Naive thymus-derived CD4-positive, alpha-beta T cell (primary cell): ENCODE measurements at regions of chr16 and their contacts with region 1.

Region 1: DNA sequence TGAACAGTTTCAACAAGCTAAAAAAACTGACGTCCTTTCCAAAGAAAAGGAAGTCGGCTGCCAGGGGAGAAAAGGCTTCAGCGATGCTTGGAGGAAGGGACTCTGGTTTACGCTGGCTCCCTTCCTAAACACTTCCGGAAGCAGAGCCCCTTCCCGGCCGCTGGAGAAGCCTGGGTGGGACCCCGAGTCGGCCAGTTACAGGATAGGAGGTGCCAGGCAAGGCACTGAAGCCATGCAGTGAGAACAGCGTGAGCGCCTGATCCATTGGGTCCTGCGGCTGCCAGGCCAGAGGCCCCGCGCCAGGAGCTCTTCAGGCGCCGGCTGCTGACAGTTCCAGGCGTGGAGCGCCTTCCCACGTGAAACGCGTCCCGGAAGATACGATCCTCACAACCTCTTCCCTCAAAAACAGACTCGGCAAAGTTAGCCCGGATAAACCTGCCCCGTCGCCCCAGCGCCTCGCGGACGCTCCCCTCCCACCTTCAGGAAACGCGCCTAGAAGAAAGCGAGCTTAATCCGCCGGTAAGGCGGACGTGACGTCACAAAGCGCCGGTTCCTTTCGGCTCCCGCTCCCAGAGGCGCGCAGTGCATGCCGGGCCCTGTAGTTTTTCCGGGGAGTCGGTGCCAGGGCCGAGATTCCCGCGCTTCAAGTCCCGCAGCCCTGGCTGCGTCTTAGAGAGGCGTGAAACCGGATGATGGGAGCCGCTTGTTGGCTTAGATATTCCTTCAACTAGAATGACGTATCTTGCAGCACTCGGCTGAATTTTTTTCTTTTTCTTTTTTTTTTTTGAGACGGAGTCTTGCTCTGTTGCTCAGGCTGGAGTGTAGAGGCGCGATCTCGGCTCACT is at the start of gene ADAT1:
- DNase-seq: peak; percentile 91 to 99 (median 97)
- ATAC-seq: peak; percentile 97
- H3K4me3 ChIP-seq: peak within 1 kb of the TSS; percentile 80
- H3K4me3 Mint-ChIP-seq: peak within 1 kb of the TSS; percentile 91 to 99 (median 96)
- H3K27ac ChIP-seq: peak within 1 kb of the TSS; percentile 93
- H3K27ac Mint-ChIP-seq: peak within 1 kb of the TSS; percentile 92 to 99 (median 97)
- H3K4me1 ChIP-seq: peaks cover 30 to 49% of the 10 kb centered on the region in 2 donors
- H3K4me1 Mint-ChIP-seq: peaks cover 29 to 76% (median 52%) of the 10 kb centered on the region in 7 donors
- H3K27me3 ChIP-seq: no peaks in the 10 kb centered on the region
- H3K27me3 Mint-ChIP-seq: no peaks in the 10 kb centered on the region
- total RNA-seq, gene ADAT1: 41.3 to 69.4 (median 63.6) TPM

Region 2: DNA sequence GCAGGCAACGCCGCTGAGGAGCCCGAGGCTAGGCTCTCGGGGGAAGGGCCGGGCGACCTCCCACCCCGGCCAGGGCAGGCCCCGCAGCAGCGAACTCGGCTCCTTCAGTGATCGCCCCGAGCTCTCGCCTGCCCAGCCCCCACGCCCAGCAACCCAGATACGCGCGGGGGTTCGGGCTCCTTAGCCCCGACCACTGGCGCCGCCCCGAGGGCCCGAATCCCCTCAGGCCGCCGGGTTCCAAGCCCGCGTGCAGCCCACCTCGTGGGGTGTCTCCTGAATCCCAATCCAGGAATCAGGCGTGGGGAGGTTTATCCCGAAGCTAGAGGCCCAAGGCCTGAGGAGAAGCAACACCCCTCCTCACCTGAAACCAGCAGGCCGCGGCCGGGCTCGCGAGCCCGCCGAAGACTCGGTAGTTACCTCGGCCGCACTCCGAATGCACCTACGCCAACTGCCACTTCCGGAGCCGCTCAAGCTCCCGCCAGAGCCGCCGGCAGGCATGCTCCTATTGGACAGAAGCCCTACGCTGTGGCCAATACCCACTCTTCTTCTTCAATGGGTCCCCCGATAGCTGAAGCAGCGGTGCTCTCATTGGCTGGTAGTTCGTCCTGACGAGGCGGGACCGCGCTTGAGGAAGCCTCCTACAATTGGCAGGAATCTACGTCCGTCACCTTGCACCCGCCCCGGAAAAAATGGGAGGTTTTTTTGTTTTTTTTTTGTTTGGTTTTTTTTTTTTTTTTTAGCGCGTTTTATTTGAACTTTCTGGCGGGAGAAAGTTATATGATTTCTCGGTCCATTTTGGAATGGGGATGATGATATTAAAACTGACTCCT is 956.3 kb before region 1 on chr16 and contains the start of gene RFWD3:
- CTCF ChIA-PET with region 1: no interaction called
- POLR2A ChIA-PET with region 1: no interaction called
- intact Hi-C with region 1: loop called in 1 of 2 experiments (anchors 10 kb)
- DNase-seq: peak; percentile 80 to 99 (median 97)
- ATAC-seq: peak; percentile 100
- H3K4me3 ChIP-seq: peak within 1 kb of the TSS; percentile 89
- H3K4me3 Mint-ChIP-seq: peak within 1 kb of the TSS; percentile 87 to 98 (median 95)
- H3K27ac ChIP-seq: peak within 1 kb of the TSS; percentile 86
- H3K27ac Mint-ChIP-seq: peak within 1 kb of the TSS; percentile 92 to 97 (median 95)
- H3K4me1 ChIP-seq: peaks cover 0 to 10% of the 10 kb centered on the region in 2 donors
- H3K4me1 Mint-ChIP-seq: peaks cover 26 to 48% (median 44%) of the 10 kb centered on the region in 7 donors
- H3K27me3 ChIP-seq: no peaks in the 10 kb centered on the region
- H3K27me3 Mint-ChIP-seq: peaks cover 0 to 2% (median 0%) of the 10 kb centered on the region in 5 donors
- total RNA-seq, gene RFWD3: 39.3 to 88.0 (median 56.9) TPM

Region 3: DNA sequence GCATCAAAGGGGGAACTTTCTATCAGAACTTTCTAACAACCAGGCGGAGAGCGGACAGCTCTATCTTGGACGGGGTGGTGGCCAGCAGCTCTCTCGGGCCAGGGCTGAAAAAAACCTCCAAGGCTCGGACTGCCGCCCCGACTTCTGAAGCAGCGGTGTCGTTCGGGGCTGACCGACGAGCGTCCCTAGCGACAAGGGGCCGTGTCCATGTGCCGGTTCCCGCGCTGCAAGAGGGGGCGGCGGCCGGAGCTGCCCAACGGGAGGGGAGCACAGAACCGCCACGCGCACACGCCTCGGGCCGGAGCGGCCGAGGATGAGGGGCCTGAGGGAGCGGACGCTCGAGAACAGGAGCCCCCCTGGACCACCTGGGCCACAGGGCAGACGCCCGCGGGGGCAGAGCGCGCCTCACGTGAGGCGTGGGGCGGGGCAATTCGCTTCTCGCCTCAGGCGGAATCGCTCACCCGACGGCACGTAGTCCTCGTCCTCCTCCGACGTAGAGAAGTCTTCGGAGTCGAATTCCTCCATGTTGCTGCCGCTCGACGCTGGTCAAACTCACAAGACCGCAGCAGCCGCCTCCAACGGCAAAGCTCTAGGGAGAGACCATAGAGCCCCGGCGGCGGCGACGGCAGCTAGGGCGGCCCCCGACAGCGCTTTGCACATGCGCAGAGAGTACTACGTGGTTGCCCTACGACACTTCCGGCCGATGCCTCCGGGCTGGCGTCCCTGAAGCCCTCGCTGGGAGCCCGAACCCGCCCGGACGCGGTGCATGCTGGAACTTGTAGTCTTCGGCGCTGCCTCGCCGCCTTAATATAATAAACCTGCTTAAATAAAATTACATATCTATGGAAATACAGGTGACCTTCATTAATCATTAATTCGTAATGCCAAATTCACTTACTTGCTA is 189.9 kb before region 1 on chr16 and contains the start of gene CFDP1:
- CTCF ChIA-PET with region 1: no interaction called
- POLR2A ChIA-PET with region 1: interaction called, 6 read pairs
- intact Hi-C with region 1: loop called (anchors 1 kb)
- DNase-seq: peak; percentile 93 to 98 (median 95)
- ATAC-seq: peak; percentile 92
- H3K4me3 ChIP-seq: peak within 1 kb of the TSS; percentile 92
- H3K4me3 Mint-ChIP-seq: peak within 1 kb of the TSS; percentile 87 to 99 (median 94)
- H3K27ac ChIP-seq: peak within 1 kb of the TSS; percentile 94
- H3K27ac Mint-ChIP-seq: peak within 1 kb of the TSS; percentile 94 to 100 (median 97)
- H3K4me1 ChIP-seq: peaks cover 5 to 9% of the 10 kb centered on the region in 2 donors
- H3K4me1 Mint-ChIP-seq: peaks cover 19 to 53% (median 43%) of the 10 kb centered on the region in 7 donors
- H3K27me3 ChIP-seq: no peaks in the 10 kb centered on the region
- H3K27me3 Mint-ChIP-seq: no peaks in the 10 kb centered on the region
- total RNA-seq, gene CFDP1: 34.9 to 41.4 (median 39.4) TPM

Region 4: GRCh38 chr16:75519881-75520280 is 103.1 kb before region 1 on chr16:
- CTCF ChIA-PET with region 1: interaction called, 3 read pairs
- POLR2A ChIA-PET with region 1: interaction called, 3 read pairs
- intact Hi-C with region 1: loop called (anchors 1 kb)
- DNase-seq: no peak
- ATAC-seq: no peak
- H3K4me3 ChIP-seq: no peak overlapping the region
- H3K4me3 Mint-ChIP-seq: no peak overlapping the region
- H3K27ac ChIP-seq: no peak overlapping the region
- H3K27ac Mint-ChIP-seq: no peak overlapping the region
- H3K4me1 ChIP-seq: peaks cover 0 to 3% of the 10 kb centered on the region in 2 donors
- H3K4me1 Mint-ChIP-seq: peaks cover 5 to 17% (median 13%) of the 10 kb centered on the region in 7 donors
- H3K27me3 ChIP-seq: no peaks in the 10 kb centered on the region
- H3K27me3 Mint-ChIP-seq: peaks cover 0 to 9% (median 0%) of the 10 kb centered on the region in 5 donors

Region 5: DNA sequence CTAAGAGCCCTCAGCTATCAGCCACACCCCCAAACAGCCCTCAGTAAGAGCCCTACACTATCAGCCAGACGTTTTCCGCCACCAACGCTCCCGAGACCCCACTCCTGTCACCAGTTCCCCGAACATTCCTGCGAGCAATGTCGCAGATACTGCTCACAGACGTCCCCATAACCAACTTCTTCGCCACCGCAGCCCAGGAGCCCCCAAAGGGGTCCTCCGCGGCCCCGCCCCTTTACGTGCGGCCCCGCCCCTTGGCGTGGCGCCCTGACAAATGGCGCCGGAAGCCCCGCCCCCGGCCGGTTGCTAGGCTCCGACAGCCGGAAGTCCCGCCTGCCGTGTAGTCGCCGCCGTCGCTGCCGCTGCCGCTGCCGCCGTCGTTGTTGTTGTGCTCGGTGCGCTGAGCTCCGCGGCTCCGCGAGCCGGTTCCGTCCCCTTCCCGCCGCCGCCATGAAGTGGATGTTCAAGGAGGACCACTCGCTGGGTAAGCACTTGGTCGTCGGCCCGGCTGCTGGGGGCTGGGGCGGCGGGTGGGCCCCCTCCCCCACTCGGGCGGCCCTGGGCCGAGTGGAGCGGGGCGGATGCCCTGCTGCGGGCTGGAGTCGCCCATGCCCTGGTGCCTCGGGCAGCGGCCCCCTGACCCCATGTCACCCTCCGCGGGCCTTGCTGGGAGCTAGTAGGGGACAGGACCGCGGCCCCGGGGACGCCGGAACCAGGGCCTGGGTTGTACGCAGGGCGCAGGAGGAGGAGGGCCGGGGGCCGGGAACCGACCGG is 56.8 kb before region 1 on chr16 and contains the start of gene GABARAPL2:
- CTCF ChIA-PET with region 1: interaction called, 3 read pairs
- POLR2A ChIA-PET with region 1: interaction called, 38 read pairs
- intact Hi-C with region 1: loop called (anchors 1 kb)
- DNase-seq: peak; percentile 87 to 97 (median 92)
- ATAC-seq: peak; percentile 90
- H3K4me3 ChIP-seq: peak within 1 kb of the TSS; percentile 93
- H3K4me3 Mint-ChIP-seq: peak within 1 kb of the TSS; percentile 88 to 100 (median 96)
- H3K27ac ChIP-seq: peak within 1 kb of the TSS; percentile 90
- H3K27ac Mint-ChIP-seq: peak within 1 kb of the TSS; percentile 79 to 100 (median 92)
- H3K4me1 ChIP-seq: peaks cover 20 to 27% of the 10 kb centered on the region in 2 donors
- H3K4me1 Mint-ChIP-seq: peaks cover 25 to 50% (median 47%) of the 10 kb centered on the region in 7 donors
- H3K27me3 ChIP-seq: no peaks in the 10 kb centered on the region
- H3K27me3 Mint-ChIP-seq: peaks cover 8 to 16% (median 13%) of the 10 kb centered on the region in 5 donors
- total RNA-seq, gene GABARAPL2: 57.9 to 81.2 (median 75.6) TPM

Region 6: DNA sequence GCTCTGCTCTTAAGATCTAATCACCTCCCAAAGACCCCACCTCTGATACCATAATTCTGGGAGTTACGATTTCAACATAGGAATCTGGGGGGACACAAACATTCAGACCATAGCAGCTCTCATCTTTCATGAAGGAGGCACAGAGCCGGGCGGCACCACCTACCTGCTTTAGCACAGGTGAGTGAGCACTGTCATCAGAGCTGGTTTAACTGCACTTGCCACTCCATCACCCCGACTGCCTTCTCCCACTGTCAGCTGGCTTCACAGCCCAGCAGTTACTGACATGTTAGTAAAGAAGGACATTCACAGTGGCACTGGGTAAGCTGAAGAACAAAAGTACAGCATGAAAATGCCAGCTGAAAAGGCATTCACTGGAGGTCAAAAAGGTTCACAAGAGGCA is 34.3 kb before region 1 on chr16:
- CTCF ChIA-PET with region 1: no interaction called
- POLR2A ChIA-PET with region 1: no interaction called
- intact Hi-C with region 1: no loop called
- DNase-seq: no peak
- ATAC-seq: no peak
- H3K4me3 ChIP-seq: no peak overlapping the region
- H3K4me3 Mint-ChIP-seq: no peak overlapping the region
- H3K27ac ChIP-seq: no peak overlapping the region
- H3K27ac Mint-ChIP-seq: peak overlapping the region in 1 of 9 donors; percentile 5
- H3K4me1 ChIP-seq: no peaks in the 10 kb centered on the region
- H3K4me1 Mint-ChIP-seq: peaks cover 0 to 4% (median 0%) of the 10 kb centered on the region in 7 donors
- H3K27me3 ChIP-seq: no peaks in the 10 kb centered on the region
- H3K27me3 Mint-ChIP-seq: no peaks in the 10 kb centered on the region

Region 7: DNA sequence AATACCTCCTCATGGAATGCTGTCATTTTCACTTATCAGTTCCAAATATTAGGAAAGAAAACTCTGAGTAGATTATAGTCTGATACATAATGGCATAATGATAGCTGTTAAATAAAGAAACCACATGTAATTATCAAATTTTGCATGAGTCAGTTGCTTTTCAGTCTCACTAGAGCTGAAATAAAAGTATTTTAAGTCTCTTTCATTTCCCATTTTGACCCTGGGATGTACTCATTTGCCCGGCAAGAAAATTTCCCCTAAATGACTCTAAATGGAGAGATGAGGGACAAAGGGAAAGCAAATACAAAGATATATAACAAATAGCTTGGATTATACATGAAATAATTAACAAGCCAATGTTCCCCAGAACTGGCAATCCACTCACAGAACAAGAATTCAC is 151.2 kb after region 1 on chr16:
- CTCF ChIA-PET with region 1: no interaction called
- POLR2A ChIA-PET with region 1: no interaction called
- intact Hi-C with region 1: no loop called
- DNase-seq: no peak
- ATAC-seq: no peak
- H3K4me3 ChIP-seq: no peak overlapping the region
- H3K4me3 Mint-ChIP-seq: no peak overlapping the region
- H3K27ac ChIP-seq: no peak overlapping the region
- H3K27ac Mint-ChIP-seq: no peak overlapping the region
- H3K4me1 ChIP-seq: no peaks in the 10 kb centered on the region
- H3K4me1 Mint-ChIP-seq: no peaks in the 10 kb centered on the region
- H3K27me3 ChIP-seq: peaks cover 0 to 15% of the 10 kb centered on the region in 2 donors
- H3K27me3 Mint-ChIP-seq: peaks cover 32 to 50% (median 45%) of the 10 kb centered on the region in 5 donors

Region 8: DNA sequence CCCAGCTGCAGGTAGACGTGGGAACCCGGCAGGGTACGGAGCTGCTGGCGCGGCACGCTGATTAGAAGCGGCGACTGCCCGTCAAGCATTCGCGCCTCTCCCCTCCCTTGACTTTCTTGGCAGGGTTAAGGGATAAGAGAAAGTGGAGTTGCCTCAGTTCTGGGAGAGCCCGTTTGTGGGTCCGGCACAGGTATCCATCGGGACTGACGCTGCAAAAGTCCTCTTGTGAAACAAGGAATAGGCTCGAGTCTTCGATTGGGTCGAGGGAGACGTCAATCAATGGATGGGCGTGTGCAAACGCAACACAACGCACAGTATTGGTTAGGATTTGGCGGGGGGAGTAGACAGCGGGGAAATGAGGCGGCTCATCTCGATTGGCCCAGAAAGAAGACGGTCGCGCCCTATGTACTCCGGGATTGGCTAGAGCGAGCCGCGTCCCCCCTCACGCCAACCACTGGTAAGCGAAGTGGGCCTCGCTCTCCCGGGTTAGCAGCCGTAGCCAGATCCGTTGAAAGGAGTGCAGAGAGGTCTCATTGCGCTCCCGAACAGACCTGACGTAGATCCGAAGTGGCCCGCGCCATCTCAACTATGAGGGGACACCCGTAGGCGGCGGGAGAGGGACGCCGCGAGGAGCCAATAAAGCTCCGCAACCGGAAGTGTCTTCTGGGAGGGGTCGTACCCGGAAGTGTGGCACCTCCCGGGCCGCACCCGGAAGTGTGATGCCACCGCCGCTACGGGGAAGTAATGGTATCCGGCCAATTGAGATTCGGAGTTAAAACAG is 1567.7 kb after region 1 on chr16 and contains the start of gene MON1B:
- CTCF ChIA-PET with region 1: no interaction called
- POLR2A ChIA-PET with region 1: no interaction called
- intact Hi-C with region 1: loop called in 1 of 2 experiments (anchors 1 kb)
- DNase-seq: peak; percentile 86 to 98 (median 97)
- ATAC-seq: peak; percentile 96
- H3K4me3 ChIP-seq: peak within 1 kb of the TSS; percentile 97
- H3K4me3 Mint-ChIP-seq: peak within 1 kb of the TSS; percentile 90 to 99 (median 96)
- H3K27ac ChIP-seq: peak within 1 kb of the TSS; percentile 86
- H3K27ac Mint-ChIP-seq: peak within 1 kb of the TSS; percentile 98 to 100 (median 100)
- H3K4me1 ChIP-seq: peaks cover 13 to 23% of the 10 kb centered on the region in 2 donors
- H3K4me1 Mint-ChIP-seq: peaks cover 36 to 55% (median 46%) of the 10 kb centered on the region in 7 donors
- H3K27me3 ChIP-seq: no peaks in the 10 kb centered on the region
- H3K27me3 Mint-ChIP-seq: peaks cover 0 to 10% (median 4%) of the 10 kb centered on the region in 5 donors
- total RNA-seq, gene MON1B: 60.8 to 87.2 (median 67.3) TPM